Breast epithelium (tissue), 4 donors: ENCODE measurements at regions of chr10 and their contacts with region 1.

Region 1: GRCh38 chr10:67385089-67385488 is 310.9 kb downstream of the CTNNA3 start:
- DNase-seq: no peak
- H3K4me3 ChIP-seq: no peak overlapping the region
- H3K27ac ChIP-seq: no peak overlapping the region
- H3K4me1 ChIP-seq: no peaks in the 10 kb centered on the region
- H3K27me3 ChIP-seq: no peaks in the 10 kb centered on the region
- CTCF ChIP-seq: no peak
- POLR2A ChIP-seq: no peak

Region 2: GRCh38 chr10:66964946-66965345 is 420.1 kb before region 1 on chr10:
- intact Hi-C with region 1: no loop called
- DNase-seq: no peak
- H3K4me3 ChIP-seq: no peak overlapping the region
- H3K27ac ChIP-seq: no peak overlapping the region
- H3K4me1 ChIP-seq: no peaks in the 10 kb centered on the region
- H3K27me3 ChIP-seq: no peaks in the 10 kb centered on the region
- CTCF ChIP-seq: no peak
- POLR2A ChIP-seq: no peak

Region 3: DNA sequence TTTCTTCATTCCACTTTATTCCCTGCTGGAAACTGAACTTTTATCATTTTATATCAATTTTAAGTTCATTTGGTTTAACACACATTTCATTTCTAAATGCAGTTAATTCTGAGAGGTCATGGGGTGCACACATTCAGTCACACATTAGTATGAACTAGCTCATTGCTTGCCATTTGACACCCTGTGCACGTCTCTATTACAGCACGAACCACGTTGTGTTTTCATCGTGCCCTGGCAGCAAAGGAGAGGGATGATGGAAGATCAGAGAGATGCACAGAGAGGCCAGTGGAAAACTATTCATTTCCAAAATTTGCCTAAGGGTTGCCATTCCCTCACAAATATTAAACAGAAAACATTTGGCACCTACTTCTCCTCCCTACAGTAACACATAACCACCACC is 265.5 kb after region 1 on chr10:
- intact Hi-C with region 1: loop called (anchors 5 kb)
- DNase-seq: no peak
- H3K4me3 ChIP-seq: no peak overlapping the region
- H3K27ac ChIP-seq: no peak overlapping the region
- H3K4me1 ChIP-seq: no peaks in the 10 kb centered on the region
- H3K27me3 ChIP-seq: no peaks in the 10 kb centered on the region
- CTCF ChIP-seq: no peak
- POLR2A ChIP-seq: no peak